ENCODE measurements at regions of chr1 and their contacts with region 1.

Region 1: DNA sequence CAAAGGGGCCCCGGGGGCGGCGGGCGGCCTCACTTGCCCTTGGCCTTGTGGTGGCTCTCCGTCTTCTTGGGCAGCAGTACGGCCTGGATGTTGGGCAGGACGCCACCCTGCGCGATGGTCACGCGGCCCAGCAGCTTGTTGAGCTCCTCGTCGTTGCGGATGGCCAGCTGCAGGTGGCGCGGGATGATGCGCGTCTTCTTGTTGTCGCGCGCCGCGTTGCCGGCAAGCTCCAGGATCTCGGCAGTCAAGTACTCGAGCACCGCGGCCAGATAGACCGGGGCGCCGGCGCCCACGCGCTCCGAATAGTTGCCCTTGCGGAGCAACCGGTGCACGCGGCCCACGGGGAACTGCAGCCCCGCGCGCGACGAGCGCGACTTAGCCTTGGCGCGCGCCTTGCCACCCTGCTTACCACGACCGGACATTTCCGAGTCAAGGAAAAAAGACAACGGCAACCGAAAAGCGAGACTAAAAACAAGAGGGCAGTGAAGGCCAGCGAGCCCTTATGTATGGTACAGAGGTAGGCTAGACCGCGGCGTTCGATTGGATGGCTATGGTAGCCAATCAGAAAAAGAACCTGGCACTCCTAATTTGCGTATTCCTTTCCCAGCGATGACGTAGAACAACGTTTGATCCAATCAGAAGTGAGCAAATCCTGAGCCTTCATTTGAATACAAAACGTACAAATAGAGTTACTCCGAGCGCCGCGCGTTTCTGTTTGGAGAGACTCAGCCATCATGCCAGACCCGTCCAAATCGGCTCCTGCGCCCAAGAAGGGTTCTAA is 29.6 kb upstream of the RNF187 start:
- DNase-seq: peak; percentile 71 to 94
- ATAC-seq: peak; percentile 68 to 83
- H3K4me3 ChIP-seq: peak overlapping the region; percentile 66
- H3K27ac ChIP-seq: peak overlapping the region; percentile 77 to 86
- H3K4me1 ChIP-seq: peaks cover 21% of the 10 kb centered on the region
- CTCF ChIP-seq: no peak
- EP300 ChIP-seq: no peak
- POLR2A ChIP-seq: peak; percentile 67
- RAD21 ChIP-seq: 0 out of 5 replicates have a peak, but pooled peaks of 1 of the 2 experiments have one; percentile 16

Region 2: DNA sequence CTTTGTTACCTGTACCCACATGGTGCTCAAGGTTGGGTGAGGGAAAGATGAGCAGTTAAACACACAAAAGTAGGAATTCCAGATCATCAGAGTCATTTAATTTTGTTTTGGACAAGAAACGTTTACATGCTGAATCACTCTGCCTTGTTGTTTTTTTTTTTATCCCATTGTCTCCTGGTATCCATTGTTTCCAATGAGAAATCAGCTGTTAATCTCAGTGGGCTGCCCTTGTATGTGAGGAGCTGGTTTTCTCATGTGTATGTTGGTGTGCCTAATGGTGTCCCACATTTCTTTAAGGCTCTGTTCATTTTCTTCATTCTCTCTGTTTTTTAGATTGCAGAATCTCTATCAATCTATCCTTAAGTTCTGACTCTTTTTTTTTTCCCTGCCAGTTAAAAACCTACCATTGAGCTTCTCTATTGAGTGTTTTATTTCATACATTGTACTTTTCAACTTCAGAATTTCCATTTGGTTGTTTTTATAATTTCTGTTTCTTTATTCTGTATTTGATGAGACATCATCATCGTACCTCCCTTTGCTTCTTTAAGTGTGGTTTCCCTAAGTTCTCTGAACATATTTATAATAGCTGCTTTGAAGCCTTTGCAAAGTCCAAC is 258.5 kb before region 1 on chr1:
- CTCF ChIA-PET with region 1: no interaction called
- POLR2A ChIA-PET with region 1: no interaction called
- DNase-seq: peak; percentile 47 to 50
- ATAC-seq: no peak
- H3K4me3 ChIP-seq: no peak overlapping the region
- H3K27ac ChIP-seq: no peak overlapping the region
- H3K4me1 ChIP-seq: no peaks in the 10 kb centered on the region
- CTCF ChIP-seq: no peak
- EP300 ChIP-seq: no peak
- POLR2A ChIP-seq: no peak
- RAD21 ChIP-seq: no peak

Region 3: GRCh38 chr1:228340686-228341449 is 116.7 kb before region 1 on chr1:
- CTCF ChIA-PET with region 1: no interaction called
- POLR2A ChIA-PET with region 1: no interaction called
- DNase-seq: no peak
- ATAC-seq: peak in 1 of 2 experiments; percentile 67; a peak in 3 of 6 replicates
- H3K4me3 ChIP-seq: no peak overlapping the region
- H3K27ac ChIP-seq: no peak overlapping the region
- H3K4me1 ChIP-seq: no peaks in the 10 kb centered on the region
- CTCF ChIP-seq: peak; percentile 16; the same call in 1 of the 3 replicates
- EP300 ChIP-seq: no peak
- POLR2A ChIP-seq: no peak
- RAD21 ChIP-seq: peak; percentile 26 to 44; a peak in 2 of 5 replicates

Region 4: DNA sequence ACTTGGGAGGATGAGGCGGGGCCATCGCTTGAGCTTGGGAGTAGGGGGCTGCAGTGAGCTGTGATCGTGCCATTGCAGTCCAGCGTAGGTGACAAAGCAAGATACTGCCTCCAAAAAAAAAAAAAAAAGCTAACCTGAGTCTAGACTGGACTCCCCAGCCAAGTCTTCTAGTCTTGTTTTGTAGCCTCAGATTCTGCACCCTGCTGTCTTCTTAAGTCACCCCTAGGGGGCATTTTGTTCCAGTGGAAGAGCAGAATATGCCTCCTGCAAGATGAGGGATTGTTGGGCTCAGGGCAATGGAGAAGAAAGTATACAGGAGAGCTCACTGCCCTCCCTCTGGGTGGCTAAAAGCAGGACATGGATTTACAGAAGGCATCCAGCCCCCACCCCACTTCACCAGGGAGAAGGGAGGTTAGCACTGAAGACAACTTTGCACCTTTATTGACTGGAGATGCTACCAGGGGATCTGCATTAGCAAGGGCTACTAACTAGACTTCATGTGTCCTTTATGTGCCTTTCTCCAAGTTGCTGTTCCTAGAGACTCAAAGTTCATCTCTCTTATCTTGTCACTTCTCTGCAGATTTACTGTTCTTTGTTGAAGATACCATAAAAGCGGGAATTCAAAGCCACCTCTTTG is 14.3 kb after region 1 on chr1:
- CTCF ChIA-PET with region 1: interaction called, 23 read pairs
- POLR2A ChIA-PET with region 1: no interaction called
- DNase-seq: peak; percentile 64 to 75
- ATAC-seq: peak; percentile 70 to 89
- H3K4me3 ChIP-seq: no peak overlapping the region
- H3K27ac ChIP-seq: no peak overlapping the region
- H3K4me1 ChIP-seq: no peaks in the 10 kb centered on the region
- CTCF ChIP-seq: peak; percentile 40
- EP300 ChIP-seq: no peak
- POLR2A ChIP-seq: no peak
- RAD21 ChIP-seq: peak in 1 of 2 experiments; percentile 55; a peak in 2 of 5 replicates